Transverse colon (tissue), 4 donors: ENCODE measurements at regions of chr4 and their contacts with region 1.

Region 1: DNA sequence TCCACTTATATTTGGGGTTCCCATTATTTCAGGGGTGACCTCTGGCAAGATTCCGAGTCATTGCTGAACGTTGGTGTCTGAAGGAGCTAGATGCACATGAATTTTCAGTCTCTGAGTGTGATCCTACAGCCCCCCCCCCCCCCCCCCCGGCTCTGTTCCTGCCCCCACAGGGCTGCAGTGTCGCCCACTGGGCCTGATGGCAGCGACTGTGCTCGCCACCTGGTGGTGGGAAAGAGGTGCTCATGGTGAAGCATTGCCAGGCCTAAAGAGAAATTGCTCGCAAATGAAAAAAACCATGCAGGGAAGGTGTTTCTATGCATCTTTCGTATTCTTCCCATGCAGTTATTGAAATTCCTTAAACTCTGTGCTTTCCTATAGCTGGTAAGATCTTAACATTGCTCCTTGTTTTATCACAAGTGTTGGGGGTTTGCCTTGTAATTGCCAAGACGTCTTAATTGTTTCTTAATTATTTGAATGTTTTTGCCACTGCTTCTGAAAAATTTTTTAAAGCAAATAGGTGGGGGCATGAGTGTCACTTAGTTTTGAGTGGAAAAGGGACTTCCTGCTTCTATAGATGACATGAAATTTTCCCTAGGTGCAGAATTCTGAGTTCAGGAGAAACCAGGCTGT is 63.2 kb downstream of the CLDN22 start:
- DNase-seq: peak; percentile 38
- H3K4me3 ChIP-seq: no peak overlapping the region
- H3K27ac ChIP-seq: peak overlapping the region in 1 of 4 donors; percentile 4
- H3K4me1 ChIP-seq: peaks cover 0 to 43% (median 11%) of the 10 kb centered on the region in 4 donors
- H3K27me3 ChIP-seq: no peaks in the 10 kb centered on the region
- CTCF ChIP-seq: peak; percentile 41 to 77 (median 66)
- EP300 ChIP-seq: no peak
- POLR2A ChIP-seq: no peak

Region 2: DNA sequence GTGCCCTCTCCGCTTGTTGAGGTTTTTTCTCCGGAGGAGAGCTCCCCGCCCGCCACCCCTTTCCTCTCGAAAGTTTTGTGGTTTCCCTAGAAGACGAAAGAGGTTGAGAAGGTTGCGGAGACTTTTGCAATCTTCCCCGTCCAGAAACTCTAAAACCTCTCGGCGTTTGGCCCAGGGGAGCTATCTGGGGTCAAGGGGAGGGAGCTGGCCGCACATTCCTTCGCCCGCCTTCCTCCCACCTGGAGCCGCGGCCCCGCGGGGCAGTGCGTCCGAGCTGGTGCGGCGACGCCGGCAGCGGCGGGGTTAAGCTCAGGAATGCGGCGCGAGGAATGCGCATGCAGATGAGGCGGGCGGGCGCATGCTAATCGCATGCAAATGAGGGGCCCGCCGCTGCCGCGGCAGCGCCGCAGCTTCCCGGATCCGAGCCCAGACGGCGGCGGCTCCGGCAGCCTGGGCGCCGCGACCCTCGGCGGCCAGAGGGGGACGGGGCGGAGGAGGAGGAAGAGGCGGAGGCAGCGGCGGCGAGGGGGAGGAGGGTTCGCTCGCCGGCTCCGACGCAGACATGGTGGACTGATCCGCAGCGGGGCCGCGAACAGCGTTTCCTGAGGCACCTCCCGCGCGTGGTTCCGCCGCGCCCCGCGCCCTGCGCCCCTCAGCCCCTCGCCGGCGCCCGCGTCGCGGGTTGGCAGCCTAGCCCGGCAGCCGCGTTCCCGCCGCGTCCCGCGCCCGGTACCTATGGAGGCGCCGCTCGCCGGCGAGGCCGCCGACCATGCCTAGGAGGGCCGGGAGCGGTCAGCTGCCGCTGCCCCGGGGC is 157.9 kb before region 1 on chr4 and contains the start of gene WWC2:
- in situ Hi-C with region 1: no loop called
- intact Hi-C with region 1: loop called (anchors 1 kb)
- DNase-seq: peak; percentile 84
- H3K4me3 ChIP-seq: peak within 1 kb of the TSS; percentile 39 to 85 (median 80)
- H3K27ac ChIP-seq: peak within 1 kb of the TSS; percentile 89 to 92 (median 90)
- H3K4me1 ChIP-seq: peaks cover 0 to 37% (median 26%) of the 10 kb centered on the region in 4 donors
- H3K27me3 ChIP-seq: peaks cover 66% of the 10 kb centered on the region
- CTCF ChIP-seq: peak in 1 of 5 experiments; percentile 8
- EP300 ChIP-seq: no peak
- POLR2A ChIP-seq: peak; percentile 19
- total RNA-seq, gene WWC2: 6.6 to 79.7 (median 9.4) TPM